ENCODE measurements at regions of chr4 and their contacts with region 1.

Region 1: DNA sequence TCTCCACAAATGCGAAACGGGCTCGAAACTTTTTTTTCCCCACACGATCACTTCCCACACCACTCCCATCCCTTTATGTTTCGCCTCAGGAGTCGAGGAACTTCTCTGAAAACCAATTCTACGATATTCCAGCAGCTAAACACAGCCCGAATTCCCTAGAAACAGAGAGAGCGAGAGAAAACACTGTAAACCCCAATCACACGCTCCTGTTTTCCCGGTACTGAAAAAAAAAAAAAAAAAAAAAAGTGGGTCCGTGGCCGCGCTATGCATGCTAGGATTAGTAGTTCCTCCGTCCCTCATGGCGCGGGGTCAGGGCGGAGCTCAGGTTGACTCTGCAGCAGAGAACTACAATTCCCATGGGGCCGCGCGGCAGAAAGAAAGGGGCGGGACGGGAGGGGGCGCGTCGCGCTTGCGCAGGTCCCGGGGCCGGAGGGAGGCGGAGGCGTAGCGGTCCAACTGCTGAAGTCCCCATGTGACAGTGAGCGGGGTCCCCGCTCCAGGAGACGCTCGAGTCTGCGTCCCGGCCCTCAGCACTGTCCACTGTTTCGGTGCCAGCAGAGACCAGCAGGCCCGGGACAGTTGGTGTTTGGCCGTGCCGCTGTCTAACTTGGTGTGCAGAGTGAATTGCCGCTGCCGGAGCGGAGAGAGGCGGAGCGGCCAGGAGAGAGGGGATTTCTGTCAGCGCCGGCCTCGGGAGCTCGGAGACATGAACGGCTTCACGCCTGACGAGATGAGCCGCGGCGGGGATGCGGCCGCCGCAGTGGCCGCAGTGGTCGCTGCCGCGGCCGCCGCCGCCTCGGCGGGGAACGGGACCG is at the start of gene SAP30:
- DNase-seq: peak; percentile 92
- ATAC-seq: peak; percentile 76
- H3K4me3 ChIP-seq: peak within 1 kb of the TSS; percentile 90
- H3K27ac ChIP-seq: peak within 1 kb of the TSS; percentile 59
- H3K4me1 ChIP-seq: peaks cover 18% of the 10 kb centered on the region
- H3K27me3 ChIP-seq: no peaks in the 10 kb centered on the region
- CTCF ChIP-seq: no peak
- total RNA-seq, gene SAP30: 33.2 and 38.8 TPM in 2 replicates

Region 2: DNA sequence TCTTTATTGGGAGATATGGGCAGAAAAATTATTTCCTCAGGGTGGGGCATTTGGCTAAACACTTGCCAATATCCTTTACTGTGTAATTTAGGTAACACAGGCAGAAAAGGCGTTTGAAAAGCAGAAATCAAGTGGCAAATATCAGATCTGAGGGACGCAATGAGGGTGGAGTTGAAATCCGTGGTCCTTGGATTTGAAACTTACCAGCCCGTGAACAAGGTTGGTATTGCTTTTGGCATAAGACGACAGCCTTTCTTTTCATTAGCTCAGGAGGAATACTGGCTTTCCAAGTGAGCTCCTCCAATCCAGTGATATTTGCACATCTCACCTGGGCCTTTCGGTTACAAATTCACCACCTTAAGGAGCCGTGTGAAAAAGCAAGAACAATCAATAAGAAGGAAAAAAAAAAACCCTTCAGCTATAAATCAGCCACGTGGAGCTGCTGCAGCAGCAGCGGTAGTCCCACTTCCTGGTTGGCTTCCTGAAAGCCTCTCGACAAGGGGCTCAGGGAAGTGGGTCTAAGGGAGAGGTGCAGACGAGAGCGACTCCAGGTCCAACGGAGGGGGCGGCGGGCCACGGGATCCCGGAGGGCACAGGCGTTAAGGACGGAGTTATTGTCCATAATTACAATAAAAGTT is 202.8 kb before region 1 on chr4:
- CTCF ChIA-PET with region 1: no interaction called
- POLR2A ChIA-PET with region 1: no interaction called
- intact Hi-C with region 1: no loop called
- DNase-seq: peak; percentile 48
- ATAC-seq: peak; percentile 32
- H3K4me3 ChIP-seq: peak overlapping the region; percentile 87
- H3K27ac ChIP-seq: peak overlapping the region; percentile 83
- H3K4me1 ChIP-seq: peaks cover 19% of the 10 kb centered on the region
- H3K27me3 ChIP-seq: no peaks in the 10 kb centered on the region
- CTCF ChIP-seq: no peak

Region 3: DNA sequence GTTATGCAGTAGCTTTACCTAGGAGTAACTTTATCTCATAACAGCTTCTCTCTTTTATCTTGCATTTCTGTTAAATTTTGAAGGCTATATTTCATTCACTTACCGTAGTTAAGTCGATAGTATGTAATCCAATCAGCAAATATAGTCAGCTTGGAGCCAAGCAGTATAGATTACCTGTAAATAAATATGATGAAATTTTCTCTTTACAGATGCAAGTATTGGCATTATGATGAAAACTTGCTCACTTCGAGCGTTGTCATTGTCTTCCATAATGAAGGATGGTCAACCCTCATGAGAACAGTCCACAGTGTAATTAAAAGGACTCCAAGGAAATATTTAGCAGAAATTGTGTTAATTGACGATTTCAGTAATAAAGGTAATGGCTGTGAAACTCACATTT is 78.8 kb before region 1 on chr4:
- CTCF ChIA-PET with region 1: interaction called, 10 read pairs
- POLR2A ChIA-PET with region 1: no interaction called
- intact Hi-C with region 1: no loop called
- DNase-seq: no peak
- ATAC-seq: no peak
- H3K4me3 ChIP-seq: no peak overlapping the region
- H3K27ac ChIP-seq: no peak overlapping the region
- H3K4me1 ChIP-seq: no peaks in the 10 kb centered on the region
- H3K27me3 ChIP-seq: no peaks in the 10 kb centered on the region
- CTCF ChIP-seq: no peak

Region 4: DNA sequence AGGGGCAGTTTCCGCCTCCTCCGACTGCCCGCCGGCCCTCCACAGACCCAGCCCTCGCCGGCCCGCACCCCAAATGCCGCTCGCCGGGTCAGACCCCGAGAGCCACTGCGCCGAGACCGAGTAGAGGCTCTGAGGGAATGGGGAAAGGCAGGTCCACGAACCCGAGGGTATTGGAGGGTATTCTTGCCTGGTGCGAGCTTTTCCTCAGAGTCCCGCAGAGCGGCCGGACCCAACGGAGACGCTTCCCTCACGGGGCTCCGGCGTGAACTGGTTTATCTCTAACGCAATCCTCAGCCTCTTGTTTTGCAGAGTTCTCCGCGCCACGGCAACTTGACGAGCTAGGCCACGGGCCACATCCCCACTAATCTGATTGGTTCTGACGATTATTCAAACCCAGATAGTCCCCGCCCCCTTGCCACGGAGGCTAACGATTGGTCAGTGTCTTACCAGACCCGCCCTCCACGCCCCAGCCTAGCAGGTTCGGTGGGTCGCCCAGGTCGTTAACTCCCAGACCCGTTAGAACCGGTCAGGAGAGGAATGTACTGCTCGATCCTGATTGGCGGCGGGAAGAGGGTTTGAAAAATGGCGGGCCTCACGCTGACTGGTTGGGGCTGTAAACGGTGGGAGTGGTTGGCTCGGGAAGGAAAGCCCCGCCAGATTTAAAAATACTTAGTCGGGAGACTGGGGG is 36.5 kb before region 1 on chr4 and contains the start of gene HMGB2:
- CTCF ChIA-PET with region 1: interaction called, 4 read pairs
- POLR2A ChIA-PET with region 1: interaction called, 52 read pairs
- intact Hi-C with region 1: loop called (anchors 1 kb)
- DNase-seq: peak; percentile 98
- ATAC-seq: peak; percentile 84
- H3K4me3 ChIP-seq: peak within 1 kb of the TSS; percentile 91
- H3K27ac ChIP-seq: peak within 1 kb of the TSS; percentile 91
- H3K4me1 ChIP-seq: peaks cover 27% of the 10 kb centered on the region
- H3K27me3 ChIP-seq: no peaks in the 10 kb centered on the region
- CTCF ChIP-seq: no peak
- total RNA-seq, gene HMGB2: 111 and 139 TPM in 2 replicates

Measured in PC-3 (cell line).